Esophagus muscularis mucosa (tissue), 4 donors: ENCODE measurements at regions of chr13 and their contacts with region 1.

Region 1: GRCh38 chr13:27251166-27252091 is at the start of gene RPL21:
- DNase-seq: peak; percentile 99
- H3K4me3 ChIP-seq: peak within 1 kb of the TSS; percentile 75 to 86 (median 80)
- H3K27ac ChIP-seq: peak within 1 kb of the TSS; percentile 90 to 96 (median 95)
- H3K4me1 ChIP-seq: peaks cover 34 to 52% (median 46%) of the 10 kb centered on the region in 4 donors
- H3K27me3 ChIP-seq: no peaks in the 10 kb centered on the region
- CTCF ChIP-seq: no peak
- EP300 ChIP-seq: peak; percentile 83
- POLR2A ChIP-seq: peak; percentile 86
- total RNA-seq, gene RPL21: 432 to 1,374 (median 1,046) TPM

Region 2: GRCh38 chr13:27171827-27172494 is 79.5 kb before region 1 on chr13:
- intact Hi-C with region 1: loop called (anchors 5 kb)
- DNase-seq: no peak
- H3K4me3 ChIP-seq: peak overlapping the region; percentile 76 to 94 (median 82)
- H3K27ac ChIP-seq: peak overlapping the region; percentile 92 to 98 (median 97)
- H3K4me1 ChIP-seq: peaks cover 32 to 45% (median 41%) of the 10 kb centered on the region in 4 donors
- H3K27me3 ChIP-seq: no peaks in the 10 kb centered on the region
- CTCF ChIP-seq: peak in 2 of 3 experiments; percentile 46 to 51
- EP300 ChIP-seq: no peak
- POLR2A ChIP-seq: no peak

Region 3: DNA sequence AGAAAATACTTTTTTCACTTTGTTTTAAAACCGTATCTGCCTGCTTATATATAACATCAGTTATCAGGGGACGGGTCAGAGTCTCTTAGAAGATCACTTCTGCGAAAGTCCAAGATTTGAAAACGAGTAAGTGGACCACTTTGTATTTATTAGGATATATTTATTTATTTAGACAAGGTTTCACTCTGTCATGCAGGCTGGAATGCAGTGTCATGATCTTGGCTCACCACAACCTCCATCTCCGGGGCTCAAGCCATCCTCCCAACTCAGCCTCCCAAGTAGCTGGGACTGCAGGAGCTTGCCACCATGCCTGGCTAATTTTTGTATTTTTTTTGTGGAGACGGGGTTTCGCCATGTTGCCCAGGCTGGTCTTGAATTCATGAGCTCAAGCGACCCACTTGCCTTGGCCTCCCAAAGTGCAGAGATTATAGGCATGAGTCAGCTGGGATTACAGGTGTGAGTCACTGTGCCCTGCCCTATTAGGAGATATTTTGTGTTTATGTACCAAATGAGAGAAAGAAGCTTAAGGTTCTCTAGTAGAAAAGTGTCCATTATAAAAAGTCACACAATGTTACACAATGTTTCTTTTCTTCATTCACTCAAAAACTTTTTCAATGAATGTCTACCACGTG is 58.7 kb after region 1 on chr13:
- intact Hi-C with region 1: no loop called
- DNase-seq: no peak
- H3K4me3 ChIP-seq: no peak overlapping the region
- H3K27ac ChIP-seq: no peak overlapping the region
- H3K4me1 ChIP-seq: no peaks in the 10 kb centered on the region
- H3K27me3 ChIP-seq: no peaks in the 10 kb centered on the region
- CTCF ChIP-seq: no peak
- EP300 ChIP-seq: no peak
- POLR2A ChIP-seq: no peak

Region 4: DNA sequence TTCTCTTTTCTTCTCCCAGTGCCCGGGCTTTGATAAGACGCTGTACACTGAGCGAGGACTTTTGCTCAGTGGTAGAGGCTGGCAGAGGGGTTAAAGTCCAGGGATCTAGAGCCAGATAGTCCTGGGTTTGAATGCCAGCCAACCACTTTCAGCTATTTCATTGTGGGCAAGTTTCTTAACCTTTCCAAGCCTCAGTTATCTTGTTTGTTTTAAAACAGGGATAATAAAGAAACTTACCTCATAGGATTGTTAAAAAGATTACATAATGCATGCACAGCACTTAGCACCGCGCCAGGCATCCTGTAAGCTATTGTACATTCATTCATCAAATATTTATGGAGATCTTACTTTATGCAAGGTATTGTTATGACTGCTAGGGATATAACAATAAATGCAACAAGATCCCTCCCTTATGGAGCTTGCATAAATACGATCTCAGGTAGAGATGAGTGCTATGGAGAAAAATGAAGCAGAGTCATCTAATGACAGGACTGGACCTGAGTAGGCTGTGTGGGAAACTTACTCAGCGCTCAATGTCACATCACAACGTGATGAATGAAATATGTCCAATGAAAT is 298.1 kb after region 1 on chr13:
- intact Hi-C with region 1: no loop called
- DNase-seq: no peak
- H3K4me3 ChIP-seq: no peak overlapping the region
- H3K27ac ChIP-seq: no peak overlapping the region
- H3K4me1 ChIP-seq: peaks cover 0 to 5% (median 0%) of the 10 kb centered on the region in 4 donors
- H3K27me3 ChIP-seq: no peaks in the 10 kb centered on the region
- CTCF ChIP-seq: no peak
- EP300 ChIP-seq: no peak
- POLR2A ChIP-seq: no peak